ENCODE measurements at regions of chr1 and their contacts with region 1.

Region 1: GRCh38 chr1:232630047-232630893 is at the start of gene SIPA1L2:
- DNase-seq: peak; percentile 84 to 89 (median 87)
- H3K4me3 ChIP-seq: peak within 1 kb of the TSS; percentile 73 to 86 (median 81)
- H3K4me3 Mint-ChIP-seq: peak within 1 kb of the TSS; percentile 96 to 99
- H3K27ac ChIP-seq: peak within 1 kb of the TSS; percentile 29 to 47
- H3K27ac Mint-ChIP-seq: peak within 1 kb of the TSS in 6 of 7 donors; percentile 74 to 89 (median 78)
- H3K4me1 ChIP-seq: peaks cover 28 to 48% of the 10 kb centered on the region in 2 donors
- H3K4me1 Mint-ChIP-seq: peaks cover 43% of the 10 kb centered on the region
- H3K27me3 ChIP-seq: peaks cover 6 to 8% of the 10 kb centered on the region in 2 donors
- H3K27me3 Mint-ChIP-seq: peaks cover 11 to 15% (median 12%) of the 10 kb centered on the region in 3 donors
- CTCF ChIP-seq: peak; percentile 50
- polyA plus RNA-seq, gene SIPA1L2: 0.64 to 6.8 (median 1.3) TPM

Region 2: DNA sequence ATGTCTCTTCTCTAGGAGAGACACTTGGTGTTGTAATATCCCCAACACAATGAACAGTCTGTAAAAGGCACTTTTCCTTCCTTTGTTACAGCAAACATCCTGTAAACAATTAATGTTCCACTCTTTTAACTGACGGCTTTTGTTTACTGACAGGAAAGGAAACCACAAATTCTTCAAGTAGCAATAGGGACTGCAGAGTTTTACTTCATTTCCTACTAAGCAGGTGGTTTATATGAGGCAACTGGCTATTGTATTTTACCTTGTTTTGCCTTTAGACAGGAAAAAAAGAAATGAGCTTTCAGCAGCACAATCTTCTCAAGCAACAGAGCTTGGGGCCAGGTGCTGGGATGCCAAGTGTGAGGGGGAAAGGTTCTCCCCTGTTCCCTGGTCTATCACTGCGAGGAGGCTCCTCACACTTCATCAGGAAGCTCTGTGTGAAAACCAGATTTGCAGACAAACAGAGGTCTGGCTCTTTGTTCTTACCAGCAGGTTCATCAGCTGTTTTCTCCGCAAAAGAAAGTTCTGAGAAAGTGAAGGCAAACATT is 51.5 kb before region 1 on chr1:
- intact Hi-C with region 1: loop called in 1 of 2 experiments (anchors 10 kb)
- DNase-seq: peak in 1 of 3 donors; percentile 5
- H3K4me3 ChIP-seq: no peak overlapping the region
- H3K4me3 Mint-ChIP-seq: no peak overlapping the region
- H3K27ac ChIP-seq: peak overlapping the region in 1 of 2 donors; percentile 31
- H3K27ac Mint-ChIP-seq: peak overlapping the region in 6 of 7 donors; percentile 12 to 67 (median 38)
- H3K4me1 ChIP-seq: peaks cover 19 to 26% of the 10 kb centered on the region in 2 donors
- H3K4me1 Mint-ChIP-seq: peaks cover 31% of the 10 kb centered on the region
- H3K27me3 ChIP-seq: no peaks in the 10 kb centered on the region
- H3K27me3 Mint-ChIP-seq: no peaks in the 10 kb centered on the region
- CTCF ChIP-seq: no peak

Region 3: DNA sequence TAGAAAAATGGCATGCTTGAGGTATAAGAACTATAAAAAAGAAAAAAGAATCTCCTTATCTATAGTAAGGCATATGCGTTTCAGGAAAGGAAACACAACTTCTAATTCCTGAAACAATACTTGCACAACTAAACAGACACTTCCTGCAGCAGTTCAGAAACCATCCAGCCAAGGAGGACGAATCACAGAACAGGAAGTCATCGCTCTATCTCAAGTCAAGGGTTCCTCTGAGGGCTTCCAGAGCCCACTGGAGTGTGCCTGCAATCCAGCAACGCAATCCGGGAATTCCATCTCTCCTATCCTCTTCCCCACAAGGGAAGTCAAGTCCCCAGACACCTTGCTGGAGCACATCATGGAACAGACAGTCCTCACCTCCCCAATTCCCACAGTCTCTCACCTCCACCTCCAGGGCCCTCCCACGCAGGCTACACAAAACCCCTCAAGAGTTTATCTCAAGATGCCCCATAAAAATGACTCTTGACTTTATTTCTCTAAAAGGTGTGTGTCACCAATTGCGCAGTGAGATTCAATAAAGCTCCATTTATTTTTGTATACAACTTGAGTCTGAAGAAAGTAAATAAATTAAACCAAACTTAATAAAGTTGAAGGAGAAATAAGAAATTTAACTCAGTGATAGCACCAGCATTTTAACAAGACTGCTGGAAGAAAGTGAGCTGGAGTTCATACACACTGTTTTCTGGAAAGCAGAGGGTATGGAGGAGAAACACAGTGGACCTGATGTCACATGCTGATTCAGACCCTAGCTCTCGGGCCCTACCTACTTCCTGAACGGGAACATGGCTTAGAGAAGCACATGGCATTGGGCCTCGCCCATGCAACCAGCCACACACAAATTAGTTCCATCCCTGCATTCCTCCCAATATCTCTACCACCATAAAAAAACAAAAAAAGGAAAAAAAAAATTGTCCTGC is 40.2 kb before region 1 on chr1:
- intact Hi-C with region 1: loop called in 1 of 2 experiments (anchors 5 kb)
- DNase-seq: peak; percentile 54 to 73 (median 68)
- H3K4me3 ChIP-seq: peak overlapping the region in 1 of 3 experiments; percentile 62
- H3K4me3 Mint-ChIP-seq: peak overlapping the region; percentile 37 to 84
- H3K27ac ChIP-seq: peak overlapping the region; percentile 70 to 87
- H3K27ac Mint-ChIP-seq: peak overlapping the region; percentile 86 to 97 (median 91)
- H3K4me1 ChIP-seq: peaks cover 31 to 35% of the 10 kb centered on the region in 2 donors
- H3K4me1 Mint-ChIP-seq: peaks cover 37% of the 10 kb centered on the region
- H3K27me3 ChIP-seq: no peaks in the 10 kb centered on the region
- H3K27me3 Mint-ChIP-seq: no peaks in the 10 kb centered on the region
- CTCF ChIP-seq: no peak

Region 4: DNA sequence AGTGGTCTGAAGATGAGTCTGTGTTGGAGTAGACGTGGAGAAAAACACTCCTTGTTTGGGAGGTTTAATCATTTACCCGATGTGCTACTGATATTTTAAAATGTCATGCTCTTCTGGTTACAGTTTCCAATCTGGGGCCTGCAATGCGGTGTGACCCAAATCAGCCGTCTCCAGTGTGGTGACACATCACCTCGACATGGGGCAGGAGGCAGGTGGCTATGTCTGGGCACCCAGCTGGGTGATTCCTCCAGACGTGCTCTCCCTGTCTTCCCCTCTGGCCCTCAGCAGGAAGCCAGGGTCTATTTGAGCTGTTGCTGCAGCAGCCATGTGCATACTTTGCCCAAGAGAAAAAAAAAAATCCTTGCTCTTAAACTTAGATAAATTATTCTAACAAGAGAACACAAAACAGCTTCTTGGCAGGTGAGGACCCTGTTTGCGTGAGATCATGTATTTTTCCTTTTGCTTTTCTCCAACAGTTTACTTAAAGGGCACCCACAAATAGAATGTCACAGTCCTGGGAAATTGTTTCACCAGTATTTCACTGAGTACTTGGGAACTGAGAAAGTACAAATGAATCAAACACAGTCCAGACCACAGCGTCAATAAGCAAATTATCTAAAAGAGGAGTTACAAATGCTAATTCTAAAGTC is 136.1 kb after region 1 on chr1:
- intact Hi-C with region 1: no loop called
- DNase-seq: peak; percentile 6 to 49 (median 36)
- H3K4me3 ChIP-seq: no peak overlapping the region
- H3K4me3 Mint-ChIP-seq: no peak overlapping the region
- H3K27ac ChIP-seq: peak overlapping the region in 1 of 2 donors; percentile 75
- H3K27ac Mint-ChIP-seq: peak overlapping the region; percentile 20 to 90 (median 73)
- H3K4me1 ChIP-seq: peaks cover 42 to 45% of the 10 kb centered on the region in 2 donors
- H3K4me1 Mint-ChIP-seq: peaks cover 48% of the 10 kb centered on the region
- H3K27me3 ChIP-seq: no peaks in the 10 kb centered on the region
- H3K27me3 Mint-ChIP-seq: no peaks in the 10 kb centered on the region
- CTCF ChIP-seq: no peak

Region 5: DNA sequence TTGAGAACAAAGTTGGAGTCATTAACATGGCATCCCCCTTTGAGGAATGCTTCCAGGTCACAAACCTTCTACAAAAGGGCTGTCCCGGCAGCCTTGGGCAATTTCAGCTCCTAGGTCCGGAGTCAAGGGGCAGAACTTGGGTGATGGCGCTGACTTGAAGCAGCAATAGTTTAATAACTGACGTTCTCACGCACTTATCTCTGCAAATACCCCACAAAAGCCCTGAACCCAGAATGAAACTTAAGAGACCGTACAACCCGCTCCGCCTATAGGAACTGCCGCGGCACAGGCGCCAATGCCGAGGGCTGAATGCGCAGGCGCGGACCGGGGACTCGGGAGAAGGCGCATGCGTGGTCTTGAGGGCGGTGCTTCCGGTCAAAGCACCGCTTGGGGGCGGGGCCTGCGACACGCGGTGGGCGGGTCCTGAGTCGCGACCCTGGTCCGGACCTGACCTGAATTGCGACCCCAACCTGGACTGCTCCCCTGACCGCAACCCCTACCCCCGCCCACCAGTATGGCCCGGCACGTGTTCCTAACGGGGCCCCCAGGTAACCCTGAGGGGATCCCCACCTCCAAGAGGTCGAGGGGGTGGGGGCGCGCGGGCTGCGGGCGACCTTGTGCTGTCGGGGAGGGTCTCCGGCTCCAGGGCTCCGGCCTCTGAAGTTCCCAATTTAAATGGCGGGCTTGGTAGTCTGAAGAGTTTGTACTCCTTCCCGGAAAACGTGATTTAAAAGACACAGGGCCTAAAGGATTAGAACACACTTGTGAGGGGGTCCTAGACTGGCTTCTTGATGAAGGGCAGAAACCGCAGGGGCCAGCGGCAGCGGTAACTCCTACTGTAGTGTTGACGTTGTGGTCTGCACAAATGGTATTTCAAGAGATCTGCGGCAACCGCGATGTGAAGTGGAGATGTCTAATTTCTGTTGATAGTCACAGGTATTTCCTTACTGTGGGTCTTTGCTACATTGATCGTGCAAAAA is 320.2 kb after region 1 on chr1 and contains the start of gene NTPCR:
- intact Hi-C with region 1: loop called in 1 of 2 experiments (anchors 10 kb)
- DNase-seq: peak; percentile 86 to 91 (median 88)
- H3K4me3 ChIP-seq: peak within 1 kb of the TSS; percentile 83 to 92 (median 84)
- H3K4me3 Mint-ChIP-seq: peak within 1 kb of the TSS; percentile 89 to 97
- H3K27ac ChIP-seq: peak within 1 kb of the TSS; percentile 48 to 92
- H3K27ac Mint-ChIP-seq: peak within 1 kb of the TSS; percentile 83 to 93 (median 91)
- H3K4me1 ChIP-seq: peaks cover 12 to 20% of the 10 kb centered on the region in 2 donors
- H3K4me1 Mint-ChIP-seq: peaks cover 30% of the 10 kb centered on the region
- H3K27me3 ChIP-seq: no peaks in the 10 kb centered on the region
- H3K27me3 Mint-ChIP-seq: peaks cover 0 to 2% (median 0%) of the 10 kb centered on the region in 3 donors
- CTCF ChIP-seq: no peak
- polyA plus RNA-seq, gene NTPCR: 8.6 to 42.0 (median 31.7) TPM

Region 6: GRCh38 chr1:233113009-233113879 is 483.0 kb after region 1 on chr1:
- intact Hi-C with region 1: loop called in 1 of 2 experiments (anchors 10 kb)
- DNase-seq: peak; percentile 96 to 99 (median 99)
- H3K4me3 ChIP-seq: peak overlapping the region; percentile 31 to 68 (median 62)
- H3K4me3 Mint-ChIP-seq: peak overlapping the region; percentile 62 to 88
- H3K27ac ChIP-seq: peak overlapping the region; percentile 84 to 94
- H3K27ac Mint-ChIP-seq: peak overlapping the region; percentile 99 to 100 (median 99)
- H3K4me1 ChIP-seq: peaks cover 39 to 43% of the 10 kb centered on the region in 2 donors
- H3K4me1 Mint-ChIP-seq: peaks cover 47% of the 10 kb centered on the region
- H3K27me3 ChIP-seq: no peaks in the 10 kb centered on the region
- H3K27me3 Mint-ChIP-seq: peaks cover 0 to 6% (median 0%) of the 10 kb centered on the region in 3 donors
- CTCF ChIP-seq: no peak

Region 7: GRCh38 chr1:233240829-233241682 is 610.8 kb after region 1 on chr1:
- intact Hi-C with region 1: loop called (anchors 10 kb)
- DNase-seq: peak; percentile 48 to 69 (median 53)
- H3K4me3 ChIP-seq: peak overlapping the region in 2 of 3 experiments; percentile 16 to 36
- H3K4me3 Mint-ChIP-seq: peak overlapping the region; percentile 37 to 75
- H3K27ac ChIP-seq: no peak overlapping the region
- H3K27ac Mint-ChIP-seq: peak overlapping the region in 1 of 7 donors; percentile 13
- H3K4me1 ChIP-seq: peaks cover 23 to 26% of the 10 kb centered on the region in 2 donors
- H3K4me1 Mint-ChIP-seq: peaks cover 28% of the 10 kb centered on the region
- H3K27me3 ChIP-seq: no peaks in the 10 kb centered on the region
- H3K27me3 Mint-ChIP-seq: peaks cover 0 to 2% (median 0%) of the 10 kb centered on the region in 3 donors
- CTCF ChIP-seq: peak; percentile 87